ENCODE measurements at regions of chr9 and their contacts with region 1.

Region 1: GRCh38 chr9:7402334-7403027 is 397.1 kb downstream of the DMAC1 start:
- DNase-seq: peak; percentile 49
- H3K4me3 ChIP-seq: no peak overlapping the region
- H3K27me3 ChIP-seq: no peaks in the 10 kb centered on the region
- CTCF ChIP-seq: no peak

Region 2: GRCh38 chr9:7316166-7316795 is 86.2 kb before region 1 on chr9:
- CTCF ChIA-PET with region 1: no interaction called
- POLR2A ChIA-PET with region 1: no interaction called
- DNase-seq: no peak
- H3K4me3 ChIP-seq: no peak overlapping the region
- H3K27me3 ChIP-seq: no peaks in the 10 kb centered on the region
- CTCF ChIP-seq: no peak

Region 3: DNA sequence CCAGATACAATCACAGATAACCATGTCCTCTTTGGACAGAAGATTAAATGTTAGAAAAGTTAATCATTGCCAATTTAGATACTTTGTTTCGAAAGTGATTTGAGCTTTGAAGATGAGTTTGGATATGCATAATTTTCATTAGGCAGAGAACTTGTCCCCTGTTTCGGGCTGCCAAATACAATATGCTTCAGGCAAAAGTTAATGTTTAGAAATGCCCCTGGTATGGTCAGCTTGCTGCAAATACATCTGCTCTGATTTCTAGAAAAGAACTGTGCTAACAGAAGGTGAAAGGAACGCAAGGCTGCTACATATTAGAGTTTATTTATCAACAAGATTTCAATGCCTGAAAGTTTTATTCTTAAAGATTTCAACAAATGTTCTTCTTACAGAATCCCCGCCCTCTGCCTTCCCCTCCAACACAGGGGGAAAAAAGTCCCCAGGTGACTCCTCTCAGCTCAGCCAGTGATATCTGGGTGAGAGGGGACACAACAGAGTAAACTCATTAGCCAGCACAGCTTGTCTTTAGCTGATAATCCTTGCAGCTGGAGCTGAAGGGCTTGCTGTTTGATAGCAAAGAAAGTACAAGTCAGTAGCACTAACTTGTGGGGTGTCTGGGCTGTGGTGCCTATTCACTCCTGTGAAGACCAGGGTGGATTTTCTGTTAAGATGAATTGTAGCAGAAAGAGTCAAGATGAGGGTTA is 38.6 kb before region 1 on chr9:
- CTCF ChIA-PET with region 1: no interaction called
- POLR2A ChIA-PET with region 1: no interaction called
- DNase-seq: no peak
- H3K4me3 ChIP-seq: no peak overlapping the region
- H3K27me3 ChIP-seq: no peaks in the 10 kb centered on the region
- CTCF ChIP-seq: no peak

Region 4: DNA sequence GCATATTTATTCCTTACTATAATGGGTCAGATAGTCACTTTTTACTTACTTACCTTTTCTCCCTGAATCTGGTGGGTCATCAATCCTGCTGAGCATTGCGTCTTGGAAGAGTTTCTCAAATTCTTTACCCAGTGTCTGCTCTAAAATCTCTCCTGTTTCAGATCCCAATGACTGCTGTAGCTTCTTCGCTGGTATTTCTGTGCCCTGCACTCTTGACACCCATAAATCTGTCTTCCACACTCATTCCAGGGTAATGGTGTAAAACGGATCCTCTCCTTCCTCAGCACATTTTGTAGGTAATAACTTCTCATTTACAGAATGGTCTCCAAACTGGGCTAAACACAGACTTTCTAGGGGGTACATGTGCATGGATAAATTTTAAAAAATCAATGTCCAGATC is 10.3 kb before region 1 on chr9:
- CTCF ChIA-PET with region 1: interaction called, 11 read pairs
- POLR2A ChIA-PET with region 1: no interaction called
- DNase-seq: no peak
- H3K4me3 ChIP-seq: no peak overlapping the region
- H3K27me3 ChIP-seq: peaks cover 2% of the 10 kb centered on the region; the same call in 1 of the 2 replicates
- CTCF ChIP-seq: no peak

Region 5: DNA sequence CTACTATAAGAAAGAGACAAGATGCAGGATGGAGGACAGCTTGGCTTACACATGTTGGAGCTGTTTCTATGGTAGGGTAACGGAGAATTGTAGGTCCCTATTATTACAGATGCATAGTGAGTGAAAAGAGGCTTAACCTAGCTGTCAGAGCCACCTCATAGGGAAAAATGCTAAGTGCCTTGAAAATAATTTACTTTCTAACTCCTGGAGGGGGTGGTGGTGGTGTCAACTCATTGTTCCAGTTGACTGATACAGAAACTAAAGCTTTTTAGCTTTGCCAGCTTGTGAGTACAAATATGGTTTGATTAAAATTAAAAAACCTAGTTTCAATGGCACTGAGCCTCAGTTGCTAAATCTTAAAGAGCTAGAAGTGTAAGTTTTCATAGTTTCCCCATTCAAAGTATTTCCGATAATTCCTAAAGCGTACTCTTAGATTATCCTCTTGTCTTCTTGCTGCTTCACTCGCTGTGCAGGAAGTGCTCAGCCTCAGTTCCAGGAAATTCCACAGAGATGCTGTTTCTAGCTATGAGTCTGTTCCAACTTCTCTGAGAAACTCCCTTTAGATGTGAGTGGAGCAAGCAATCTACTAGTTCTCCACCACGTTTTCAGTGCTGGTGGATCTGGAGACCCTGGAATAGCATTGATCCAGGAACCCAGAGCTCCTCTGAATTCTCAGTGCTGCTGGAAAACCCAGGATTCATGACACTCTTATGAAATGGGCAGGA is 131.9 kb after region 1 on chr9:
- CTCF ChIA-PET with region 1: interaction called, 11 read pairs
- POLR2A ChIA-PET with region 1: no interaction called
- DNase-seq: no peak
- H3K4me3 ChIP-seq: no peak overlapping the region
- H3K27me3 ChIP-seq: no peaks in the 10 kb centered on the region
- CTCF ChIP-seq: no peak

Measured in BJ (cell line).